CD4-positive, alpha-beta memory T cell (primary cell): ENCODE measurements at regions of chr9 and their contacts with region 1.

Region 1: GRCh38 chr9:132944302-132945185 is at the start of gene TSC1:
- DNase-seq: peak; percentile 96 to 99 (median 97)
- H3K4me3 ChIP-seq: peak within 1 kb of the TSS; percentile 74 to 91
- H3K4me3 Mint-ChIP-seq: peak within 1 kb of the TSS; percentile 94 to 98 (median 96)
- H3K27ac ChIP-seq: peak within 1 kb of the TSS; percentile 90
- H3K27ac Mint-ChIP-seq: peak within 1 kb of the TSS; percentile 99 to 100 (median 100)
- H3K4me1 ChIP-seq: peaks cover 27% of the 10 kb centered on the region
- H3K4me1 Mint-ChIP-seq: peaks cover 11 to 36% (median 22%) of the 10 kb centered on the region in 4 donors
- H3K27me3 ChIP-seq: no peaks in the 10 kb centered on the region
- H3K27me3 Mint-ChIP-seq: peaks cover 0 to 3% of the 10 kb centered on the region in 2 donors
- total RNA-seq, gene TSC1: 72.7 to 76.5 TPM

Region 2: GRCh38 chr9:132877824-132878694 is 66.5 kb before region 1 on chr9 and contains the start of gene AK8:
- CTCF ChIA-PET with region 1: interaction called, 3 read pairs
- POLR2A ChIA-PET with region 1: interaction called, 22 read pairs
- intact Hi-C with region 1: loop called (anchors 2 kb)
- DNase-seq: peak; percentile 68 to 82 (median 79)
- H3K4me3 ChIP-seq: peak within 1 kb of the TSS; percentile 73 to 98
- H3K4me3 Mint-ChIP-seq: peak within 1 kb of the TSS; percentile 83 to 91 (median 85)
- H3K27ac ChIP-seq: peak within 1 kb of the TSS; percentile 70
- H3K27ac Mint-ChIP-seq: peak within 1 kb of the TSS; percentile 83 to 94 (median 86)
- H3K4me1 ChIP-seq: peaks cover 12% of the 10 kb centered on the region
- H3K4me1 Mint-ChIP-seq: peaks cover 8 to 17% (median 12%) of the 10 kb centered on the region in 4 donors
- H3K27me3 ChIP-seq: no peaks in the 10 kb centered on the region
- H3K27me3 Mint-ChIP-seq: peaks cover 0 to 1% of the 10 kb centered on the region in 2 donors
- total RNA-seq, gene AK8: 0.28 TPM in 1 of 2 experiments, not detected in the other

Region 3: GRCh38 chr9:132908635-132909034 is 35.9 kb before region 1 on chr9:
- CTCF ChIA-PET with region 1: interaction called, 3 read pairs
- POLR2A ChIA-PET with region 1: interaction called, 11 read pairs
- intact Hi-C with region 1: no loop called
- DNase-seq: peak; percentile 55 to 69 (median 65)
- H3K4me3 ChIP-seq: no peak overlapping the region
- H3K4me3 Mint-ChIP-seq: peak overlapping the region; percentile 15 to 80 (median 70)
- H3K27ac ChIP-seq: no peak overlapping the region
- H3K27ac Mint-ChIP-seq: peak overlapping the region; percentile 61 to 92 (median 82)
- H3K4me1 ChIP-seq: peaks cover 18% of the 10 kb centered on the region
- H3K4me1 Mint-ChIP-seq: peaks cover 9 to 24% (median 14%) of the 10 kb centered on the region in 4 donors
- H3K27me3 ChIP-seq: no peaks in the 10 kb centered on the region
- H3K27me3 Mint-ChIP-seq: no peaks in the 10 kb centered on the region

Region 4: GRCh38 chr9:132994410-132995120 is 50.0 kb after region 1 on chr9:
- CTCF ChIA-PET with region 1: no interaction called
- POLR2A ChIA-PET with region 1: no interaction called
- intact Hi-C with region 1: no loop called
- DNase-seq: no peak
- H3K4me3 ChIP-seq: no peak overlapping the region
- H3K4me3 Mint-ChIP-seq: peak overlapping the region in 1 of 8 donors; percentile 20
- H3K27ac ChIP-seq: no peak overlapping the region
- H3K27ac Mint-ChIP-seq: no peak overlapping the region
- H3K4me1 ChIP-seq: no peaks in the 10 kb centered on the region
- H3K4me1 Mint-ChIP-seq: peaks cover 0 to 4% (median 0%) of the 10 kb centered on the region in 4 donors
- H3K27me3 ChIP-seq: peaks cover 3% of the 10 kb centered on the region
- H3K27me3 Mint-ChIP-seq: peaks cover 19 to 34% of the 10 kb centered on the region in 2 donors

Region 5: DNA sequence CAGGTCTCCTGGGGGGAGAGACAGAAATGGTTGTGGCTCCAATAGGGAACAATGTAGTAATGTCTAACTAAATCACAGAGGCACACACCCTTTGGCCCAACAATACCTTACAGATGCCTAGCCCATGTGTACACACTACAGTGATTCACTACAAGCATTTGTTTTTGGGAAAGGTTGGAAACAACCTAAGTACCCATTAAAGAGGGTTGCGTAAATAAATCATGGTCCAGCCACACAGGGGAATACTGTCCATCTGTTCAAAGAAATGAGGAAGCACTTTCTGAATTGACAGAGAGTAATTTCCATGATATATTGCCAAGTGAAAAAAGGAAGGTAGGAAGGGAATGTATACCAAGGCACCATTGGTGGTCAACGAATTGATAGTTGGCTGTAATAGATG is 64.3 kb after region 1 on chr9:
- CTCF ChIA-PET with region 1: no interaction called
- POLR2A ChIA-PET with region 1: no interaction called
- intact Hi-C with region 1: no loop called
- DNase-seq: no peak
- H3K4me3 ChIP-seq: no peak overlapping the region
- H3K4me3 Mint-ChIP-seq: no peak overlapping the region
- H3K27ac ChIP-seq: no peak overlapping the region
- H3K27ac Mint-ChIP-seq: no peak overlapping the region
- H3K4me1 ChIP-seq: no peaks in the 10 kb centered on the region
- H3K4me1 Mint-ChIP-seq: no peaks in the 10 kb centered on the region
- H3K27me3 ChIP-seq: no peaks in the 10 kb centered on the region
- H3K27me3 Mint-ChIP-seq: peaks cover 26 to 32% of the 10 kb centered on the region in 2 donors

Region 6: GRCh38 chr9:133170716-133171559 is 226.4 kb after region 1 on chr9:
- CTCF ChIA-PET with region 1: no interaction called
- POLR2A ChIA-PET with region 1: no interaction called
- intact Hi-C with region 1: no loop called
- DNase-seq: no peak
- H3K4me3 ChIP-seq: no peak overlapping the region
- H3K4me3 Mint-ChIP-seq: no peak overlapping the region
- H3K27ac ChIP-seq: no peak overlapping the region
- H3K27ac Mint-ChIP-seq: no peak overlapping the region
- H3K4me1 ChIP-seq: no peaks in the 10 kb centered on the region
- H3K4me1 Mint-ChIP-seq: no peaks in the 10 kb centered on the region
- H3K27me3 ChIP-seq: no peaks in the 10 kb centered on the region
- H3K27me3 Mint-ChIP-seq: peaks cover 0 to 3% of the 10 kb centered on the region in 2 donors